ENCODE measurements at regions of chr5 and their contacts with region 1.

Region 1: GRCh38 chr5:188488-189481 is 2.5 kb upstream of the LRRC14B start:
- DNase-seq: peak; percentile 94
- ATAC-seq: peak; percentile 91
- H3K4me3 Mint-ChIP-seq: no peak overlapping the region
- H3K27ac Mint-ChIP-seq: no peak overlapping the region
- H3K4me1 Mint-ChIP-seq: peaks cover 8% of the 10 kb centered on the region
- H3K27me3 Mint-ChIP-seq: no peaks in the 10 kb centered on the region; the same call in 1 of the 2 replicates
- CTCF ChIP-seq: peak; percentile 87

Region 2: GRCh38 chr5:91556-92263 is 97.1 kb before region 1 on chr5 and contains the start of gene PLEKHG4B:
- CTCF ChIA-PET with region 1: interaction called, 13 read pairs
- POLR2A ChIA-PET with region 1: no interaction called
- DNase-seq: peak; percentile 91
- ATAC-seq: peak; percentile 94
- H3K4me3 Mint-ChIP-seq: peak within 1 kb of the TSS; percentile 79
- H3K27ac Mint-ChIP-seq: peak within 1 kb of the TSS; percentile 91
- H3K4me1 Mint-ChIP-seq: peaks cover 58% of the 10 kb centered on the region
- H3K27me3 Mint-ChIP-seq: peaks cover 3% of the 10 kb centered on the region; the same call in 1 of the 2 replicates
- CTCF ChIP-seq: no peak
- total RNA-seq, gene PLEKHG4B: 51.4 to 53.0 TPM (median 52.1 TPM) in 3 replicates

Region 3: DNA sequence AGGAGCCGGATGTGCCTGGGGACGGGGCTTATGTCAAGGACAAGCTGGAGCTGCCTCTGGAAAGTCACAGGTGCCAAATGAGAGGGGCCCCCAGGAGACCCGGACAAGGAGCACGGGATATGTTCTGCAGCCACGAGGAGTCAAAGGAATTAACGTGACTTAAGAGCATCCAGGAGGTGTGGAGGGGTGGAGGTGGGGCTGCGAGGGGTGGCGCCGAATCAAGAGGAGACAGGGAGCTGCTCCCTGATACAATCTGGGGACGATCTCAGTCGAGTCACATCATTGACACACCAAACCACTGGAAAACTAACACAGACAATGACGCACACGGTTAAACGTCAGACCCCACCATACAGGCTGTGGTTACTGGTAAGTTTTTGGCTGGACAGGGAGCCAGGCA is 18.8 kb after region 1 on chr5:
- CTCF ChIA-PET with region 1: interaction called, 14 read pairs
- POLR2A ChIA-PET with region 1: no interaction called
- DNase-seq: no peak
- ATAC-seq: no peak
- H3K4me3 Mint-ChIP-seq: no peak overlapping the region
- H3K27ac Mint-ChIP-seq: peak overlapping the region; percentile 81; the same call in 1 of the 2 replicates
- H3K4me1 Mint-ChIP-seq: peaks cover 8% of the 10 kb centered on the region
- H3K27me3 Mint-ChIP-seq: no peaks in the 10 kb centered on the region
- CTCF ChIP-seq: no peak

Region 4: DNA sequence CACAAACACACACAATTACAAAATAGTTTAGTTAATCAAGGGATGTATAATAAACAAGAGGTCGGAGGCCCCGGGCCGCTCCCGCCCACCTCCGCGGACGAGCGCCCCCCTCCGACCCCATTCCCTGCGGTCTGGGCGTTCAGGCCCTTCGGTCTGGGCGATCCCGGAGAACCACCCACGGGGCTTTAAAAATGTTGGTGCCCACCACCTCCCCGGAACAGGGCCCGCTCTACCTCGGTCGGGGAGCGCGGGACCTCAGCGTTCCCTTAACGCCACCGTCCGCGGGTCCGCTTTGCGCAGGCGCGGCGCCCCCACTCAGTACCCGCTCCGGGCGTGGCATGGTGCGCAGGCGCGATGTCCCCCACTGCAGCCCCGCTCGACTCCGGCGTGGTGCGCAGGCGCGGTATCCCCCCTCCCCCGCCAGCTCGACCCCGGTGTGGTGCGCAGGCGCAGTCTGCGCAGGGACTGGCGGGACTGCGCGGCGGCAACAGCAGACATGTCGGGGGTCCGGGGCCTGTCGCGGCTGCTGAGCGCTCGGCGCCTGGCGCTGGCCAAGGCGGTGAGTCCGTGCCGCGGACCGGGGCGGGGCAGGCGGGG is 29.2 kb after region 1 on chr5 and contains the starts of genes CCDC127 and SDHA:
- CTCF ChIA-PET with region 1: interaction called, 47 read pairs
- POLR2A ChIA-PET with region 1: interaction called, 5 read pairs
- DNase-seq: peak; percentile 97
- ATAC-seq: peak; percentile 86
- H3K4me3 Mint-ChIP-seq: peak within 1 kb of the TSS; percentile 93
- H3K27ac Mint-ChIP-seq: peak within 1 kb of the TSS; percentile 94
- H3K4me1 Mint-ChIP-seq: peaks cover 36% of the 10 kb centered on the region
- H3K27me3 Mint-ChIP-seq: no peaks in the 10 kb centered on the region
- CTCF ChIP-seq: no peak
- total RNA-seq, gene CCDC127: 5.3 to 8.4 TPM (median 6.3 TPM) in 3 replicates
- total RNA-seq, gene SDHA: 135 to 145 TPM (median 137 TPM) in 3 replicates

Region 5: DNA sequence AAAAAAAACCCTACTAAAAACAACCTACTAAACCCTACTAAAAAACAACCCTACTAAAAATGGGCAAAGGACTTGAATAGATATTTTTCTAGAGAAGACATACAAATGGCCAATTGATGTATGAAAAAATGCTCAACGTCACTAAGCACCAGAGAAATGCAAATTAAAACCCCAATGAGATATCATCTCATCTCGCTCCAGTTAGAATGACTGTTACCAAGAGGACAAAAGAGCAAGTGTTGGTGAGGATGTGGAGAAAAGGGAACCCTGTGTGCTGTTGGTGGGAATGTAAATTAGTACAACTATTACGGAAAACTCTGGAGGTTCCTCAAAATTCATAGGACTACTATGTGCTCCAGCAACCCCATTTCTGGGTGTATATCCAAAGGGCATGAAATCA is 40.1 kb after region 1 on chr5:
- CTCF ChIA-PET with region 1: no interaction called
- POLR2A ChIA-PET with region 1: no interaction called
- DNase-seq: no peak
- ATAC-seq: no peak
- H3K4me3 Mint-ChIP-seq: no peak overlapping the region
- H3K27ac Mint-ChIP-seq: no peak overlapping the region
- H3K4me1 Mint-ChIP-seq: peaks cover 5% of the 10 kb centered on the region
- H3K27me3 Mint-ChIP-seq: no peaks in the 10 kb centered on the region
- CTCF ChIP-seq: no peak

Region 6: DNA sequence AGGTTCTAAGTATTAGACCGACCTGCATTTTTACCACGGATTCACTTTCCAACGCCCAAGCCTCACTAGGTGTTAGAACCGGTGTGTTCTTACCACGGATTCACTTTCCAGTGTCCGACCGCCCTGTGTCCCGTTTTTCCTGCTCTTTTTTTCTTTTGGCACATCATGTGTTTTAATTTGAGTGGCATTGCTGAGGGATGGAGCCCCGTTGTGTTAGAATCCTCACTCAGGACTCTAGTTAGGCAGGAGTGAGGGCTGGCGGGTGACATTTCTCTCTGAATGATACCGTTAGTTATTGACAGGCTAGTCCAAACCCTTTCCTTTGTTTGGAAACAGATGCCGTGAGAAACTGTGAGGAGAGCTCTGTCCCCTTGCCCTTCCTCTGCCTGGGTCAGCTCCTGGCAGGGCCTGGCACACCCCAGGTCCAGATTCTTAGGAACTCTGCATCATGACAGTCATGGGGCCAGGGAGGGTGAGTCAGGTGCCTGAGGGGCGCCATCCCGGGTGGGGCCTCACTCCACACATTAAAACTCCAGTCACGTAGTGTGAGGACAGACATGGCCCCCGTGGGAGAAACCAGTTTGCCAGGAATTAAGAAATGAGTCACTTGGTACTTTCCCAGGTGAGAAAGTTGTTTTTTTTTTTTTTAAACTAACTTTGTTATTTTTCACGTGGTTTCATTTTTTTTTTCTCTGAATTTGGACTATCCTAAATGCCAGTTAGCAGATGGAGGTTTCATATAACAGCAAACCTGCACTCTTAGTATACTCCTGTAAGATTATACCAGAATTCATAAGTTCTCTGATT is 270.0 kb after region 1 on chr5:
- CTCF ChIA-PET with region 1: no interaction called
- POLR2A ChIA-PET with region 1: no interaction called
- DNase-seq: no peak
- ATAC-seq: no peak
- H3K4me3 Mint-ChIP-seq: no peak overlapping the region
- H3K27ac Mint-ChIP-seq: no peak overlapping the region
- H3K4me1 Mint-ChIP-seq: peaks cover 14% of the 10 kb centered on the region
- H3K27me3 Mint-ChIP-seq: no peaks in the 10 kb centered on the region
- CTCF ChIP-seq: no peak

Measured in WTC11 (cell line).